B cell (primary cell): ENCODE measurements at regions of chr5 and their contacts with region 1.

Region 1: GRCh38 chr5:5752844-5753243 is 330.4 kb downstream of the ICE1 start:
- DNase-seq: peak; percentile 63
- ATAC-seq: peak; percentile 65
- H3K4me3 ChIP-seq: peak overlapping the region in 1 of 5 experiments; percentile 40
- H3K4me3 Mint-ChIP-seq: peak overlapping the region; percentile 81
- H3K27ac ChIP-seq: peak overlapping the region; percentile 62
- H3K27ac Mint-ChIP-seq: peak overlapping the region; percentile 90
- H3K4me1 ChIP-seq: peaks cover 52 to 59% of the 10 kb centered on the region in 2 donors
- H3K4me1 Mint-ChIP-seq: peaks cover 69% of the 10 kb centered on the region
- H3K27me3 ChIP-seq: no peaks in the 10 kb centered on the region
- H3K27me3 Mint-ChIP-seq: no peaks in the 10 kb centered on the region
- CTCF ChIP-seq: no peak

Region 2: DNA sequence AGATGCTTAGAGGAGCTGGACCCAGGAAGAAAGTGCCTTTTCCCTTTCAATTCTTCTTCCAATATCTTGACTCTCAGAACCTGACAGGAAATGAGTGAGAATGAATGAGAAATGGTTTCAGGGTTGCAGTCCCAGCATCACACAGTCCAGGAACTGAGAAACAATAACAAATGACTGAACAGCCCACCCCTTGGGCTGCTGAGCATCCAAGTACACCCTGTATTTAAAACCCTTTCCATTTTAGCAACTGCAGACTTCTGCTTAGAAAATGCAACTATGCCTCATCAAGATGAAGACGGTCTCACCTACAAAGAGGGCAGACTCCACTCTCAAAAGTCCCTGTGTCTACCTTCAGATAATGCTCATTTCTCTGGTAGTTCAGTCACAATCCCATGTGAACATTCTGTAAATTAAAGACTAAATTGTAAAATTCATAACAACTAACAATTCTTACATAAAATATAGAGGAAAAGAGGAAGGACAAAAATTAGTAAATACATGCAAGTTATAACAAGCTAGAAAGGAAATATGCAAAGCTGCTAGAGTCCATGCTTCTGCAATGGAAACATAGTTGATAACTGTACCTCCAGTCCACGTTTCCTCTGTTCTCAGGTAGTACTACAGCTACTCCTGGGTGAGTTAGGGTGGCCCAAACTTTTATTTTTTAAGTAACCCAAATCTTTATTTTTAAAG is 13.9 kb before region 1 on chr5:
- CTCF ChIA-PET with region 1: no interaction called
- POLR2A ChIA-PET with region 1: no interaction called
- intact Hi-C with region 1: loop called (anchors 1 kb)
- DNase-seq: no peak
- ATAC-seq: peak; percentile 78
- H3K4me3 ChIP-seq: no peak overlapping the region
- H3K4me3 Mint-ChIP-seq: peak overlapping the region; percentile 32
- H3K27ac ChIP-seq: no peak overlapping the region
- H3K27ac Mint-ChIP-seq: peak overlapping the region; percentile 46
- H3K4me1 ChIP-seq: peaks cover 18 to 21% of the 10 kb centered on the region in 2 donors
- H3K4me1 Mint-ChIP-seq: peaks cover 44% of the 10 kb centered on the region
- H3K27me3 ChIP-seq: no peaks in the 10 kb centered on the region
- H3K27me3 Mint-ChIP-seq: no peaks in the 10 kb centered on the region
- CTCF ChIP-seq: no peak

Region 3: GRCh38 chr5:5787373-5787772 is 34.5 kb after region 1 on chr5:
- CTCF ChIA-PET with region 1: no interaction called
- POLR2A ChIA-PET with region 1: no interaction called
- intact Hi-C with region 1: no loop called
- DNase-seq: no peak
- ATAC-seq: no peak
- H3K4me3 ChIP-seq: no peak overlapping the region
- H3K4me3 Mint-ChIP-seq: no peak overlapping the region
- H3K27ac ChIP-seq: no peak overlapping the region
- H3K27ac Mint-ChIP-seq: no peak overlapping the region
- H3K4me1 ChIP-seq: no peaks in the 10 kb centered on the region
- H3K4me1 Mint-ChIP-seq: peaks cover 4% of the 10 kb centered on the region
- H3K27me3 ChIP-seq: peaks cover 0 to 6% (median 0%) of the 10 kb centered on the region in 4 experiments
- H3K27me3 Mint-ChIP-seq: no peaks in the 10 kb centered on the region
- CTCF ChIP-seq: no peak